ENCODE measurements at regions of chr3 and their contacts with region 1.

Region 1: DNA sequence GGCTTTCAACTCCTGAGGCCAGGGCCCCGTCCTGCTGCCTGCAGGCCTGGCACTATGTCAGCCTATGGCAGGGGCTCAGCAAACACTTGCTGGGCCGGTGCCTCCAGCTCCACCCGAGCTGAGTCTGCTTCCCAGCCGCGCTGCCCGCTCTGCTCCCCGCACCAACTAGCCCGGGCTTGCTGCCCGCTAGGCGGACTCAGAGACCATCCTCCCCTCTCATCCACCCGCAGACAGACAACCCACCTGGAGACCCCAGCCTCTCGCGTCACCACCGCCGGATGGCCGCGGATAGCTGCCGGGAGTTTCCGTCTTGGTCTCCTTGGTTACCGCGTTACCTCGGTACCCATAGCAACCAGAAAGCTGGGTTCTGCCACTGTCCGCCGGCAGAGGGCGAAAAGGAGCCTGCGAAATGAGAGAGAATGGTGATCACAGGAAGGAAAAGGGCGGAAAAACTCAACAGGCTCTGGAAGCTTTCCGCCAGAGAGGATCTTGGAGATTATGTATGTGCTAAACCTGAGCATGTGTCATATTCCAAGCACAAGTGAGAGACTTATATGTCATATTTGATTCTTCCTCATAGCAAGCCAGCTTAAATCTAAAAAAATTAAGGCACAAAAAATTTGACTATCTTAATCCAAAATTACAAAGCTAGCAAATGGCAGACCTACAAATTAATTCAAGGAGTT is at the start of gene ZBBX:
- DNase-seq: peak; percentile 78
- H3K4me3 ChIP-seq: peak within 1 kb of the TSS in 1 of 2 donors; percentile 28
- H3K27ac ChIP-seq: no peak within 1 kb of the TSS
- H3K4me1 ChIP-seq: no peaks in the 10 kb centered on the region
- H3K27me3 ChIP-seq: no peaks in the 10 kb centered on the region
- CTCF ChIP-seq: peak; percentile 67 to 90 (median 80)
- POLR2A ChIP-seq: no peak
- total RNA-seq, gene ZBBX: 3.0 TPM in 1 of 2 donors, not detected in the other

Region 2: DNA sequence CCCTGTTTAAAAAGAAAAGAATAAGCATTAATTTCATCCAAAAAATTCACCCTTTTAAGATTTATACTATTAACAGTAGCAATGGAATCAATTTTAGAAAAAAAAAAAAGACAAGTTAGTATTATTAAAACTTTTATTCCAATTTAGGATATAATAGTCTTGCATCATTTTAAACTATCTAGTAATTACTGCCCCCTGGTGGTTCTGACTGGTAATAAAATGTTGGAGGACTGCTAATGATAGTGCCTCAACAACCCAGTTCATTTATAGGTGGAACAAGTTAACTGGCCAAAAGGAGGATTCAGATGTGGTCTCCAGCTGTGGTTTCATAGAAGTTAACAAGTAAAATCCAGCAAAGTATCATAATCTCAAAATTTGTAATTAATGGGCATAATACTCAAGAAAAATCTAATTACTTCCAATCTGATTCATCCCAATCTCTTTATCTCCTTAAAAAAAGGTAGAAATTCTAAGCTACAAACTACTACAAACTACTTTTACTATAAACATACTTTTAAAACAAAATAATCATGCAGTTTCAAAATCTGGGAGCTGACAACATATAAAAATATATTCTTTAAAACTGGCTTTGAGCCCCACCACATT is 304.3 kb after region 1 on chr3:
- intact Hi-C with region 1: loop called (anchors 10 kb)
- DNase-seq: peak; percentile 61
- H3K4me3 ChIP-seq: no peak overlapping the region
- H3K27ac ChIP-seq: no peak overlapping the region
- H3K4me1 ChIP-seq: no peaks in the 10 kb centered on the region
- H3K27me3 ChIP-seq: no peaks in the 10 kb centered on the region
- CTCF ChIP-seq: peak; percentile 36 to 84 (median 55)
- POLR2A ChIP-seq: no peak

Region 3: DNA sequence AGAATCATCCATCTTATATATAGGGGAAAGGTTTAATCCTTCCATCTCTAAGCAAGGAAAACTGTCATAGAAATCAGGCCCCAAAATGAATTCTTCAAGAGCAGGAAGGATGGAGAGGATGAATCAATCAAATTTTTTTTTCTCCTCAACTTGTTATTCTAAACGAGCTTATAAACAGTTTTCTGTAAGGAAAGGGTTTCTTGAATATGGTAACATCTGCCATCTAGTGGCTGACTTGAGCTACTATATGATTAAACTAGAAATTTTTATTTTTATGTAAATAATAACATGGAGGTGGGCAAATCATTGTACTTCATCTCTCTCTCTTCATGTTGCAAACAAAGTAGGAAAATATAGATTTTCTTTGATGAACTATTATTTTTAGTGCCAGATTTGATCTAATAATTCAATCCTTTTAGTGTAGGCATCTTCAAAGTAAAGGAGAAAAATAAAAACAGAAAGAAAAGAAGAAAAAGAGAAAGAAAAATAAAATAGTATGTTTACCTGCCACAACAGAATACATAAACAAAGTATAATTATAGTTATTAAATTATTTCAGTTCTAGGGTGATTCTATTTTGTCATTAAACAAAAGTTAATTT is 502.0 kb after region 1 on chr3:
- intact Hi-C with region 1: loop called (anchors 10 kb)
- DNase-seq: no peak
- H3K4me3 ChIP-seq: no peak overlapping the region
- H3K27ac ChIP-seq: no peak overlapping the region
- H3K4me1 ChIP-seq: no peaks in the 10 kb centered on the region
- H3K27me3 ChIP-seq: no peaks in the 10 kb centered on the region
- CTCF ChIP-seq: peak; percentile 62 to 79 (median 70)
- POLR2A ChIP-seq: no peak

Measured in prostate gland (tissue), 2 donors.